GM13977 (cell line): ENCODE measurements at regions of chr5 and their contacts with region 1.

Region 1: GRCh38 chr5:58460732-58461286 is 923 bp upstream of the PLK2 start:
- DNase-seq: peak; percentile 81
- CTCF ChIP-seq: peak; percentile 84

Region 2: DNA sequence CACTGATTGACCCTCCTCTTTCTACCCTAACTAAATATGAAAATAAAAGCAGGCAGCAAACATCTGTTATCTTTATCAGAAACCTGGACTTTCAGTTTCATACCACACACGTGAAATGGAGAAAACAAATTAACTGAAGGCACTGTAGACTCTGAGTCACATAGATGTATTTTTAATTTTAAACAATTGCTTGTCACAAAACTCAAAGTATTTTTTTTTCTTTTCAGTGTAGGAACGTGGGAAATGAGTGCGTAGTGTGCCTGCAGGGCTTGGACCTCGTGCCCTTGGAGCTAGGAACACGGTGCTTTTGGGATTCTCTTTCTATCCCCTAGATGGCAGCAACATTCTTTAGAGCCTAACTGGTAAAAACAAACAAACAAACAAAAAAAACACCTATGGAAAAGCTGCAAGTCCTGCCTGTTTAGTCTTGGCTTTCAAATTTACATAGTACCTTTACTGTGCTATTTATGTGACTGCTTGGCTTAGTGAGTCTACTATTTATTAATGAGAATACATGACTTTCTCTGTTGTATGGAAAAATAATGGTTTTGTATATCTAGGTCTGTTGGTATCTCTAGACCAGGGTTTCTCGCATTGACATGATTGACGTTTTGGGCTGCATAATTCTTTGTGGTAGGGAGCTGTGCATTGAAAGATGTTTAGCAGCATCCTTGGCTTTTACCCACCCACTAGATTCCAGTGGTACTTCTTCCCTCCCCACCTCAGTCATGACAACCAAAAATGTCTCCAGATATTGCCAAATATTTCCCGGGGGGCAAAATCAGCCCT is 961.4 kb before region 1 on chr5:
- in situ Hi-C with region 1: loop called (anchors 10 kb)
- DNase-seq: peak; percentile 42
- CTCF ChIP-seq: peak; percentile 67

Region 3: GRCh38 chr5:57779383-57780223 is 681.2 kb before region 1 on chr5:
- in situ Hi-C with region 1: loop called (anchors 25 kb)
- DNase-seq: peak; percentile 16
- CTCF ChIP-seq: peak; percentile 53

Region 4: DNA sequence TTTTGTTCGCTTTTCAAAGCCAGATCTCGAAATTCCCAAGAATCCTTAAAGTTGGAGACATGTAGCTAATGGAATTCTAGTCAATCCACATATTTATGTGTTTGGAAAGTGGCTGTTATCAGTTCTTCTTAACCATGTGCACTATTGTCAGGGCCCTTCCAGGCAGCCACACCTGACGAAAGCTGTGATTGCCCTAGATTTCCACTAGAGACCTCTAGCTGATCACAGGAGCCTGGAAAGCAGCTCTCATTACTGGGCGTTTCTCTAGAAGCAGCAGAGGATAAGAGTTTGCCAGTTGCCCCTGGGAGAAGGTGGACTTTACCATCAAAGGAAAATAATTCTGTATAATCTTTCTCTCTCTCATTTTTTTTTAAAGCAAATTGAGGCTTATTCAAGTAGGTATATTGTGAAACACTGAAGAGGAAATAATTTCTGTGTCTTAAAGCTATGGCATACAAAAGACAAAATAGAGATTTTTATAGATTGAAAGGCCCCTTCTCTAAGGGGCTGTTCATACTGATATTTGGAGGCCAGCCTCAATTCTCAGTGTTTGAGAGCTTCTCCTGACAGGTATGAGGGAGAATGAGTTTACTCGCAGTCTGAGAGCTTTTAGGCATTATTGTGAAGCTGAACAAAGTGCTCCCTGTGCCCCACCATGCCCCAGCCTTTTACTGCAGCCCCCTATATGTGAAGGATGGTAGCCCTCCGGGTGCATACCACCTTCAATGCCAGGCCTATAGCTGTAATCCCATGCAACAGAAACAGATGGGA is 572.8 kb before region 1 on chr5:
- in situ Hi-C with region 1: loop called (anchors 25 kb)
- DNase-seq: no peak
- CTCF ChIP-seq: no peak

Region 5: DNA sequence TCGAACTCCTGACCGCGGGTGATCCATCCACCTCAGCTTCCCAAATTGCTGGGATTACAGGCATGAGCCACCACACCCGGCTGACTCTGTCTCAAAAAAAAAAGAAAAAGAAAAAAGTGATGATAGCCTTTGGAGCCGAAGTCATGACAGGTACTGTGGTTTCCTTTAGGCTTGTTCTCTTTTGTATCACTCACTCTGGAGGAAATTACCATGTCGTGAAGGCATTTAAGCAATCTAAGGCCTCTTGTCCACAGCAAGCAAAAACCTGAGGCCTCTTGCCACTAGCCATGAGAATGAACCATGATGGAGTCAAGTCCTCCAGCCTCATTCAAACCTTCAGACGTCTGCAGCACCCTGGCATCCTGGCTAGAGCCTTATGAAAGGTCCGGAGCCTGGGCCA is 408.1 kb after region 1 on chr5:
- in situ Hi-C with region 1: no loop called
- DNase-seq: no peak
- CTCF ChIP-seq: no peak